Calu3 (cell line): ENCODE measurements at regions of chr18 and their contacts with region 1.

Region 1: GRCh38 chr18:52288403-52289004 is 51.5 kb upstream of the DCC start:
- DNase-seq: peak; percentile 62
- H3K4me3 Mint-ChIP-seq: no peak overlapping the region
- H3K27ac Mint-ChIP-seq: no peak overlapping the region
- H3K4me1 Mint-ChIP-seq: no peaks in the 10 kb centered on the region
- H3K27me3 Mint-ChIP-seq: peaks cover 9% of the 10 kb centered on the region
- CTCF ChIP-seq: peak; percentile 77

Region 2: DNA sequence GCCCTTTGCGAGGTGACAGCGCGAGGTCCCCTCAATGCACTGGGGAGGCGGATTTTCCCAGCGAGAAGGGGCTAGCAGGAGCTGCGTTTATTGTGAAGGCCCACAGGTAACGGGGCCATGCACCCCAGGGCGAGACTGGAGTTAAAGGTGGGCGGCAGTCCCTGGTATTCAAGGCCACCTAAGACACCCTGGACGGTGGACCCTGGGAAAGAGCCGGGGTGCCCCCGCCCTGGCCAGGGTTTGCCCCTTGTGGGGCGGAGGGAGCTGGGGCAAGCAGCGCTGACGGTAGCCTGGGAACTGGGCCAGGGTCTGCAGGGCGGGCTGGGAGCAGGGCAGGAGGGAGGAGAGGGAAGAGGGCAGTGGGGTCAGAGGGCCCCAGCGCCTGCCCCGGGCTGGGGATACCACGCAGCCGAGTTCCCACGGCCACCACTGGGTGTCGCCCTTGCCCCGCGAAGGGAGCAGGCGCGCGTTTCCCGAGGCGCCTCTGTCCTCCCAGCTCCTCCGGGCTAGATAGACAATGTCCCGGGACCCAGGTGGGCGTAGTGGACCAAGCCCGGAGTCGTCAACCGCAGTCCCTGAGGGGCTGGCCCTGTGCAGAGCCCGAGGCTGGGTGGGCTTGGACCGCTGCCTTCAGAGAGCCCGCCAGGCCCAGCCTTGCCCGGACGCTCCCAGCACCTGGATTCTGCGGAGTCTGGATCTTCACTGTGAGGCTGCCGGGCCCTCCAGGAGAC is 1178.3 kb before region 1 on chr18:
- CTCF ChIA-PET with region 1: interaction called, 3 read pairs
- intact Hi-C with region 1: loop called (anchors 5 kb)
- DNase-seq: peak; percentile 85
- H3K4me3 Mint-ChIP-seq: no peak overlapping the region
- H3K27ac Mint-ChIP-seq: no peak overlapping the region
- H3K4me1 Mint-ChIP-seq: peaks cover 16% of the 10 kb centered on the region
- H3K27me3 Mint-ChIP-seq: no peaks in the 10 kb centered on the region
- CTCF ChIP-seq: peak; percentile 98

Region 3: DNA sequence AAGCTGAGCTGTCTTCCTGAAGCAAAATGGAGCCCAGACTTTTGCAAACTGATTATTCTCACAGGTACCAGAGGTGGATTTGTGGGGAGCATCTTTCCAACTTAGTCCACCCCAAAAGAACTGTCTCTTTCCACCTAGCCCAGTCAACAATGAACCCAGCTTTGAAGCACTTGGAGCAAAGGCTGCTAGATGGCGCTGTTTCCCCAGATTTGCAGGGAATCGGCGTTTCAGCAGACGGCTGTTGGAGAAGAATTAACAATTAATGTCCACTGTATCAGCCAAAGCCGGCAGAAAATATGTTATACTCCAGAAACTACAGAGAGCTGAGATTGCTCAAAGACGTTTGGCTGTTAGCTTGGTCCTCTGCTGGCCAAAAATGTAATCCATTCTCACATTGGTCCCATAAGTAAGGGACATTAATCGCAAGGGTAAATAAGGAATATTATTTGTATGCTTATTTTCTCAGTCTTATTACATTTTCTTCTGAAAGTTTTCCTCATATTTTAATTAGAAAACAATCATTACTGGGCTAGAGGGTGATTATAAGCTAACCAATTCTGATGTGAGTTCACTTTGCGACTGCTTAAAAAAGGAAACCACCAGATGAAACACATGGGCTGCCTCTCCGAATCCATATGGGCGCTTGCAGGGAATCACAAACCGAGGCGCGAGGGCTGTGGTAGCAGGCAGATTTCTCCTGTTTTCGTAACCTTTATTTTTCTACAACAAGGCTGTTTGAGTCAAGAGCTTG is 667.2 kb before region 1 on chr18:
- CTCF ChIA-PET with region 1: no interaction called
- intact Hi-C with region 1: loop called (anchors 1 kb)
- DNase-seq: peak; percentile 66
- H3K4me3 Mint-ChIP-seq: no peak overlapping the region
- H3K27ac Mint-ChIP-seq: no peak overlapping the region
- H3K4me1 Mint-ChIP-seq: no peaks in the 10 kb centered on the region
- H3K27me3 Mint-ChIP-seq: peaks cover 77% of the 10 kb centered on the region
- CTCF ChIP-seq: peak; percentile 82